CD4-positive, alpha-beta memory T cell (primary cell): ENCODE measurements at regions of chr2 and their contacts with region 1.

Region 1: GRCh38 chr2:181104512-181105115 is 124.2 kb downstream of the UBE2E3 start:
- DNase-seq: peak in 4 of 5 donors; percentile 48 to 57 (median 52)
- H3K4me3 ChIP-seq: no peak overlapping the region
- H3K4me3 Mint-ChIP-seq: peak overlapping the region in 4 of 8 donors; percentile 0 to 43 (median 6)
- H3K27ac ChIP-seq: no peak overlapping the region
- H3K27ac Mint-ChIP-seq: peak overlapping the region; percentile 1 to 58 (median 8)
- H3K4me1 ChIP-seq: peaks cover 54% of the 10 kb centered on the region
- H3K4me1 Mint-ChIP-seq: peaks cover 29 to 49% (median 35%) of the 10 kb centered on the region in 4 donors
- H3K27me3 ChIP-seq: no peaks in the 10 kb centered on the region
- H3K27me3 Mint-ChIP-seq: no peaks in the 10 kb centered on the region

Region 2: DNA sequence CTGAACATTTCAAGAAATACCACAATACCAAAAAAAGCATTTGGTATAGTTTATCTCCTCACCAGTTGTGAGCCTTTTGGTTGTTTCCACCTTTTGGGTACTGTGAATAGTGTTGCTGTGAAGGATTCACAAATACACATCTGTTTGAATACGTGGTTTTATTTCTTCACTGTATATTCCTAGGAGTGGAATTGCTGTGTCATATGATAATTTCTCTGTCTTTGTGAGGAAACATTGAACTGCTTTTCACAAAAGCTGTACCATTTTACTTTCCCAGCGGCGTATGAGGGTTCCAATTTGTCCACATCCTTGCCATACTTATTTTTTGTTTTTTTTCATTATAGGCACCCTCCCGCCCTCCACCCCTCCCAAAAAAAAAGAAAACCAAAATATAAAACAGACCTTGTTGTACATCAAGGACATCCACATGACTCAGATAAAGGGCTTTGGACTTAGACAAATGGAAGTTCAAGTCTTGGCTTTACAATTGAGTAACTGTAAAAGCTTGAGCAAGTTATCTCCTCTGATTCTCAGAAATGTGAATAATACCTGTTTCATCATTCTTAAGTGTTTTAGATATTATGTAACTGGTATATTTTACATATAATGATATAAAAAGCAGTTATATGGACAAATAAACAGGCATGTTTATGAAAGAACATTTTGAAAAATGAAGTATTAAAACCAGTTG is 105.2 kb before region 1 on chr2:
- CTCF ChIA-PET with region 1: no interaction called
- POLR2A ChIA-PET with region 1: no interaction called
- intact Hi-C with region 1: no loop called
- DNase-seq: no peak
- H3K4me3 ChIP-seq: no peak overlapping the region
- H3K4me3 Mint-ChIP-seq: no peak overlapping the region
- H3K27ac ChIP-seq: no peak overlapping the region
- H3K27ac Mint-ChIP-seq: no peak overlapping the region
- H3K4me1 ChIP-seq: no peaks in the 10 kb centered on the region
- H3K4me1 Mint-ChIP-seq: peaks cover 12 to 29% (median 20%) of the 10 kb centered on the region in 4 donors
- H3K27me3 ChIP-seq: no peaks in the 10 kb centered on the region
- H3K27me3 Mint-ChIP-seq: no peaks in the 10 kb centered on the region

Region 3: DNA sequence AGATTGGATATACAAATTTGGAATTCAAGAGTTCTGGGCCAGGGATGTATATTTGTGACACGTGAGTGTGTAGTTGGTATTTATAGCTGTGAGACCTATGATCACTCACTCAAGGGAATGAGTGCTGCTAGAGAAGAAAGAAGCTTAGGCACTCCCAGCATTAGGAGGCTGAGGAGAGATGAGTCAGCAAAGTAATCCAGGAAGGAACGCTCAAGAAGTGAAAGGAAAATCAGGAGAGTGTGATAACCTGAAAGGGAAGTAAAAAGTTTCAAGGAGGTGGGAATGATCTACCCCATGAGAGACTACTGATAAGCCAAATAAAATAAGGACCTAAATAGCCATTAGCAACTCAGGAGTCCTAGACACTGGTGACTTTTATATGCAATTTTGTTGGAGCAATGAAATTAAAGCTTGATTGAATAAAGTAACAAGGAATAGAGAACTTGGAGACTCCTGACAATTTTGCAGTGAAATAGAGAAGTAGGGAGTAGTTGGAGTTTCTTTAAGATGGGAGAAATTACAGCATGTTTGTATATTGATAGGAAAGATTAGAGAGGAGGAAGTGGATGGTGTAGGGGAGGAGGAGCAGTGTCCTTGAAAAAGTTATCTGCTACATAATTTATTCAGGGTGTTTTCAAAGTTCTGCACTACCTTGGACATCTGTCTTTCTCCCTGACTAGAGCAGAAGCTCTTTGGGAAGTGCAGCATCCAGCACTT is 34.3 kb before region 1 on chr2:
- CTCF ChIA-PET with region 1: no interaction called
- POLR2A ChIA-PET with region 1: no interaction called
- intact Hi-C with region 1: no loop called
- DNase-seq: no peak
- H3K4me3 ChIP-seq: no peak overlapping the region
- H3K4me3 Mint-ChIP-seq: no peak overlapping the region
- H3K27ac ChIP-seq: no peak overlapping the region
- H3K27ac Mint-ChIP-seq: no peak overlapping the region
- H3K4me1 ChIP-seq: no peaks in the 10 kb centered on the region
- H3K4me1 Mint-ChIP-seq: peaks cover 0 to 4% (median 2%) of the 10 kb centered on the region in 4 donors
- H3K27me3 ChIP-seq: no peaks in the 10 kb centered on the region
- H3K27me3 Mint-ChIP-seq: no peaks in the 10 kb centered on the region

Region 4: GRCh38 chr2:181130686-181131085 is 26.1 kb after region 1 on chr2:
- CTCF ChIA-PET with region 1: interaction called, 34 read pairs
- POLR2A ChIA-PET with region 1: interaction called, 92 read pairs
- intact Hi-C with region 1: no loop called
- DNase-seq: no peak
- H3K4me3 ChIP-seq: peak overlapping the region in 1 of 2 donors; percentile 1
- H3K4me3 Mint-ChIP-seq: peak overlapping the region in 6 of 8 donors; percentile 73 to 90 (median 78)
- H3K27ac ChIP-seq: peak overlapping the region; percentile 57
- H3K27ac Mint-ChIP-seq: peak overlapping the region in 6 of 7 donors; percentile 78 to 96 (median 94)
- H3K4me1 ChIP-seq: peaks cover 66% of the 10 kb centered on the region
- H3K4me1 Mint-ChIP-seq: peaks cover 29 to 70% (median 38%) of the 10 kb centered on the region in 4 donors
- H3K27me3 ChIP-seq: no peaks in the 10 kb centered on the region
- H3K27me3 Mint-ChIP-seq: no peaks in the 10 kb centered on the region

Region 5: DNA sequence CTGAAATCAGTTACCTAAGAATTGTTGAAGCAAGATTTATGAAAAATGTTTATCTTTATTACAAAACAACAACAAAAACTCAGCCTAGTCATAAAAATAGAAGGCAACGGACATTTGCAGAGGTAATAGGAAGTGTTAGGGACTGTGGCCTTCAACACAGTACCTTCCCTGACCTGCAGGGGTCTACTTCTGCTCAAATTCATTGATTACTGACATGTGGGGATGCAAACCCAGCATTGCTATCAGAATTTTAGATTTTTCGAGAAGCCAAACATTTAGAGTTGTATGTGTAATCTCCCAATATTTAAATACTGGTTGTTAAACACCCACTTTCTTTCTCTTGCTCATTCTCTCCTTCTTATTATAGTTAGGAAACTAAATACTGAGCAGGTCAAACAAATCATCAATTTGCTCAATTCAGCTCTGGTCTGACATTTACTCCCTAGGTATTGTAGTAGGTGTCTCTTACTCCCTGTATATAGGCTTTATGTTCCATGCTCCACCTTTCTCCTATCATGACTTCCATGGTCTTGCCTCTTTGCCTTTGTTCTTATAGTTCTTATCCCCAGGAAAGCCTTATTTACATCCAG is 74.3 kb after region 1 on chr2:
- CTCF ChIA-PET with region 1: interaction called, 20 read pairs
- POLR2A ChIA-PET with region 1: no interaction called
- intact Hi-C with region 1: loop called (anchors 2 kb)
- DNase-seq: peak in 4 of 5 donors; percentile 29 to 43 (median 37)
- H3K4me3 ChIP-seq: no peak overlapping the region
- H3K4me3 Mint-ChIP-seq: peak overlapping the region in 4 of 8 donors; percentile 19 to 41 (median 34)
- H3K27ac ChIP-seq: peak overlapping the region; percentile 1
- H3K27ac Mint-ChIP-seq: peak overlapping the region; percentile 12 to 90 (median 54)
- H3K4me1 ChIP-seq: peaks cover 52% of the 10 kb centered on the region
- H3K4me1 Mint-ChIP-seq: peaks cover 31 to 39% (median 36%) of the 10 kb centered on the region in 4 donors
- H3K27me3 ChIP-seq: no peaks in the 10 kb centered on the region
- H3K27me3 Mint-ChIP-seq: no peaks in the 10 kb centered on the region

Region 6: GRCh38 chr2:181252262-181253148 is 147.9 kb after region 1 on chr2:
- CTCF ChIA-PET with region 1: no interaction called
- POLR2A ChIA-PET with region 1: no interaction called
- intact Hi-C with region 1: no loop called
- DNase-seq: no peak
- H3K4me3 ChIP-seq: no peak overlapping the region
- H3K4me3 Mint-ChIP-seq: peak overlapping the region in 1 of 8 donors; percentile 29
- H3K27ac ChIP-seq: no peak overlapping the region
- H3K27ac Mint-ChIP-seq: peak overlapping the region in 2 of 7 donors; percentile 3 to 52
- H3K4me1 ChIP-seq: peaks cover 7% of the 10 kb centered on the region
- H3K4me1 Mint-ChIP-seq: peaks cover 10 to 16% (median 13%) of the 10 kb centered on the region in 4 donors
- H3K27me3 ChIP-seq: no peaks in the 10 kb centered on the region
- H3K27me3 Mint-ChIP-seq: no peaks in the 10 kb centered on the region

Region 7: GRCh38 chr2:181275643-181276070 is 171.0 kb after region 1 on chr2:
- CTCF ChIA-PET with region 1: interaction called, 8 read pairs
- POLR2A ChIA-PET with region 1: interaction called, 5 read pairs
- intact Hi-C with region 1: loop called (anchors 1 kb)
- DNase-seq: peak; percentile 17 to 45 (median 43)
- H3K4me3 ChIP-seq: no peak overlapping the region
- H3K4me3 Mint-ChIP-seq: peak overlapping the region in 6 of 8 donors; percentile 12 to 69 (median 40)
- H3K27ac ChIP-seq: peak overlapping the region; percentile 31
- H3K27ac Mint-ChIP-seq: peak overlapping the region; percentile 57 to 92 (median 78)
- H3K4me1 ChIP-seq: peaks cover 40% of the 10 kb centered on the region
- H3K4me1 Mint-ChIP-seq: peaks cover 26 to 54% (median 37%) of the 10 kb centered on the region in 4 donors
- H3K27me3 ChIP-seq: no peaks in the 10 kb centered on the region
- H3K27me3 Mint-ChIP-seq: no peaks in the 10 kb centered on the region

Region 8: GRCh38 chr2:181312515-181312927 is 207.9 kb after region 1 on chr2:
- CTCF ChIA-PET with region 1: interaction called, 9 read pairs
- POLR2A ChIA-PET with region 1: interaction called, 26 read pairs
- intact Hi-C with region 1: no loop called
- DNase-seq: peak; percentile 38 to 55 (median 45)
- H3K4me3 ChIP-seq: peak overlapping the region in 1 of 2 donors; percentile 27
- H3K4me3 Mint-ChIP-seq: peak overlapping the region; percentile 12 to 77 (median 71)
- H3K27ac ChIP-seq: peak overlapping the region; percentile 46
- H3K27ac Mint-ChIP-seq: peak overlapping the region; percentile 88 to 97 (median 95)
- H3K4me1 ChIP-seq: peaks cover 75% of the 10 kb centered on the region
- H3K4me1 Mint-ChIP-seq: peaks cover 34 to 56% (median 46%) of the 10 kb centered on the region in 4 donors
- H3K27me3 ChIP-seq: no peaks in the 10 kb centered on the region
- H3K27me3 Mint-ChIP-seq: no peaks in the 10 kb centered on the region

Region 9: DNA sequence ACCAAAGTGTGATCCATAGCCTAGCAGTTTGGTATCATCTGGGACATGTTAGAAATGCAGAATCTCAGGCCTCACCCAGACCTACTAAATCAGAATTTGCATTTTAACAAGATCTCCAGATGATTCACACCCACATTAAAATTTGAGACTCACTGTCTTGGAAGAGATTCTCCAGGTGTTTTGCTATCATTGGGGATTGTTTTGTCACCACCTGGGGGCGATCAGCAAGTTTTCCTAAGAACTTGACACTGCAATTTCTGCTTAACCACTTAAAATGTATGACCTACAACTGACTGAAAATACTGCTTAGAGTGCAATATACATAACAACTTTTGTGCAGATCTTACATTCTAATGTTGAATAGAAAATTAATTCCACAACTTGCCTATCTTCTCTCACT is 333.6 kb after region 1 on chr2:
- CTCF ChIA-PET with region 1: interaction called, 26 read pairs
- POLR2A ChIA-PET with region 1: no interaction called
- intact Hi-C with region 1: loop called (anchors 1 kb)
- DNase-seq: peak in 1 of 5 donors; percentile 34
- H3K4me3 ChIP-seq: no peak overlapping the region
- H3K4me3 Mint-ChIP-seq: no peak overlapping the region
- H3K27ac ChIP-seq: no peak overlapping the region
- H3K27ac Mint-ChIP-seq: no peak overlapping the region
- H3K4me1 ChIP-seq: peaks cover 10% of the 10 kb centered on the region
- H3K4me1 Mint-ChIP-seq: peaks cover 6 to 14% (median 11%) of the 10 kb centered on the region in 4 donors
- H3K27me3 ChIP-seq: no peaks in the 10 kb centered on the region
- H3K27me3 Mint-ChIP-seq: no peaks in the 10 kb centered on the region

Region 10: GRCh38 chr2:181715033-181715630 is 610.5 kb after region 1 on chr2:
- CTCF ChIA-PET with region 1: interaction called, 28 read pairs
- POLR2A ChIA-PET with region 1: interaction called, 3 read pairs
- intact Hi-C with region 1: loop called (anchors 1 kb)
- DNase-seq: peak; percentile 51 to 68 (median 58)
- H3K4me3 ChIP-seq: no peak overlapping the region
- H3K4me3 Mint-ChIP-seq: no peak overlapping the region
- H3K27ac ChIP-seq: no peak overlapping the region
- H3K27ac Mint-ChIP-seq: no peak overlapping the region
- H3K4me1 ChIP-seq: no peaks in the 10 kb centered on the region
- H3K4me1 Mint-ChIP-seq: no peaks in the 10 kb centered on the region
- H3K27me3 ChIP-seq: no peaks in the 10 kb centered on the region
- H3K27me3 Mint-ChIP-seq: peaks cover 0 to 3% of the 10 kb centered on the region in 2 donors